ENCODE measurements at regions of chr1 and their contacts with region 1.

Region 1: GRCh38 chr1:154183045-154183915 is 8.6 kb downstream of the TPM3 start:
- DNase-seq: peak; percentile 97
- ATAC-seq: peak; percentile 72
- H3K4me3 Mint-ChIP-seq: peak overlapping the region; percentile 99
- H3K27ac Mint-ChIP-seq: peak overlapping the region; percentile 100
- H3K4me1 Mint-ChIP-seq: peaks cover 43% of the 10 kb centered on the region
- H3K27me3 Mint-ChIP-seq: peaks cover 6% of the 10 kb centered on the region

Region 2: DNA sequence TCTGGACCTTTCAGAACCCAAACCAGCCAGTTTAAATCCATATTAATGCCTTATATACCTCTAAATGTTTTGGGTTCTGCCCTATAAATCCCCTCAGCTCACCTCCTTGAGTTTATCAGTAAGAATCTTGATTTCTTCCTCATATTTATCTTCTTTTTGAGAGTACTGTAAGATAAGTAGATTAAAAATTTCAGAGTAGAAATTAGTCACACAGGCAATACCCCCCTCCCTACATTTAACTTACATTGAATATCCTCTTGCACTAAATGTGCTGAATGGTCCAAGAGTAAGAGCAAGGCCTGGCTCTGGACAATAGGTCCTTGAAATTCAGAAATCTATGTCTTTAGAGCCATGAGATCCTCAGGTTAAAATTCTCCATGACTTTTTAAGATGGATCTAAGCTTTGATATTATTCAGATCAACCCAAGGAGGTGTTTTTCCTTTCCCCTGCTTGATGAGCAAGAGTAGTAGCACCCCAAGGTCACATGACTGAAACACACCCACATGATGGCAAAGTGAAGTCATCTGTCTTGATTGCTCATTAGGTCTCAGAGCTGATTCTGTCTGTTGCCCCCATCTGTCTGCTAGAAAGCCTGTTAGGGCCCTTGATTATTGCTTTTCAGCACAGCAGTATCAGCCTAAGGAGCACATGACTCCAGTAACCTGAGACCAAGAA is 12.6 kb before region 1 on chr1:
- CTCF ChIA-PET with region 1: interaction called, 3 read pairs
- POLR2A ChIA-PET with region 1: interaction called, 12 read pairs
- DNase-seq: no peak
- ATAC-seq: peak; percentile 50
- H3K4me3 Mint-ChIP-seq: no peak overlapping the region
- H3K27ac Mint-ChIP-seq: peak overlapping the region; percentile 43
- H3K4me1 Mint-ChIP-seq: peaks cover 34% of the 10 kb centered on the region
- H3K27me3 Mint-ChIP-seq: no peaks in the 10 kb centered on the region

Region 3: DNA sequence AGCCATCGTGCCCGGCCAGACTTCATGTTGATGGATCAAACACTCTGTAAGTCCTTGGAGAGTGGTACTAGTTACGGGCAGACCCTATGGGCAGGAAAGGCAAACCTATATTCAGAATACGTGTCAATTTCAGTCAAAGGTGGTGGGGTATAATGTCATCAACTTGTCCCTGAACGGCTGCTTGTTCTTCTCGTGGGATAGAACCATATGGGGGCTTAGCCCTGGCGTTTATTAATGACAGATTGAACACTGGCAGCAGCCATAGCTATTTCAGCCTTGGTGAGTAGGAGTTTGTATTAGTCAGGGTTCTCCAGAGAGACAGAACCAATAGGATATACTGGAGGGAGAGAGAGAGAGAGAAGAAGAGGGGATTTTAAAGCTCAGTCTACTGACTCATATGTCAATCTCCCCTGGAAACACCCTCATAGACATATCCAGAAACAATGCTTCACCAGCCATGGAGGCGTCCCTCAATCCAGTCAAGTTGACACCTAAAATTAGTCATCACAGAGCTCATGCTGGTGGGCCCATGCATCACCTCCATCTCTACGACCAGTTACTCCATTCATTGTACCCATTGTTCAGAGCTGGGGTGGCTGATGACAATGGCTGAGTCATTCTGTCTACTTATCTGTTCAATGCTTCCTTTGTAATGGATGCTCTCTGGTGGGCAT is 121.5 kb after region 1 on chr1:
- CTCF ChIA-PET with region 1: no interaction called
- POLR2A ChIA-PET with region 1: no interaction called
- DNase-seq: no peak
- ATAC-seq: no peak
- H3K4me3 Mint-ChIP-seq: no peak overlapping the region
- H3K27ac Mint-ChIP-seq: no peak overlapping the region
- H3K4me1 Mint-ChIP-seq: no peaks in the 10 kb centered on the region
- H3K27me3 Mint-ChIP-seq: no peaks in the 10 kb centered on the region